WTC11 (cell line): ENCODE measurements at regions of chr6 and their contacts with region 1.

Region 1: GRCh38 chr6:26216356-26216885 is 129.2 kb downstream of the HFE start:
- DNase-seq: no peak
- ATAC-seq: peak; percentile 53
- H3K4me3 Mint-ChIP-seq: no peak overlapping the region
- H3K27ac Mint-ChIP-seq: no peak overlapping the region
- H3K4me1 Mint-ChIP-seq: peaks cover 36% of the 10 kb centered on the region
- H3K27me3 Mint-ChIP-seq: no peaks in the 10 kb centered on the region
- CTCF ChIP-seq: no peak

Region 2: GRCh38 chr6:26054857-26055669 is 161.4 kb before region 1 on chr6:
- CTCF ChIA-PET with region 1: no interaction called
- POLR2A ChIA-PET with region 1: interaction called, 18 read pairs
- DNase-seq: peak; percentile 74
- ATAC-seq: peak; percentile 66
- H3K4me3 Mint-ChIP-seq: peak overlapping the region; percentile 89
- H3K27ac Mint-ChIP-seq: peak overlapping the region; percentile 98
- H3K4me1 Mint-ChIP-seq: peaks cover 29% of the 10 kb centered on the region
- H3K27me3 Mint-ChIP-seq: no peaks in the 10 kb centered on the region
- CTCF ChIP-seq: no peak

Region 3: GRCh38 chr6:26175428-26176181 is 40.8 kb before region 1 on chr6:
- CTCF ChIA-PET with region 1: interaction called, 5 read pairs
- POLR2A ChIA-PET with region 1: interaction called, 15 read pairs
- DNase-seq: peak; percentile 46
- ATAC-seq: peak; percentile 7; the same call in 1 of the 2 replicates
- H3K4me3 Mint-ChIP-seq: peak overlapping the region; percentile 25; the same call in 1 of the 2 replicates
- H3K27ac Mint-ChIP-seq: 0 out of 2 replicates have a peak overlapping the region, but pooled peaks have one; percentile 45
- H3K4me1 Mint-ChIP-seq: peaks cover 28% of the 10 kb centered on the region
- H3K27me3 Mint-ChIP-seq: no peaks in the 10 kb centered on the region; the same call in 1 of the 2 replicates
- CTCF ChIP-seq: peak; percentile 28; the same call in 1 of the 2 replicates

Region 4: GRCh38 chr6:26234421-26235296 is 18.2 kb after region 1 on chr6:
- CTCF ChIA-PET with region 1: no interaction called
- POLR2A ChIA-PET with region 1: interaction called, 216 read pairs
- DNase-seq: no peak
- ATAC-seq: peak; percentile 70
- H3K4me3 Mint-ChIP-seq: peak overlapping the region; percentile 94
- H3K27ac Mint-ChIP-seq: peak overlapping the region; percentile 99
- H3K4me1 Mint-ChIP-seq: peaks cover 33% of the 10 kb centered on the region
- H3K27me3 Mint-ChIP-seq: no peaks in the 10 kb centered on the region
- CTCF ChIP-seq: no peak

Region 5: GRCh38 chr6:26285143-26286134 is 69.0 kb after region 1 on chr6:
- CTCF ChIA-PET with region 1: no interaction called
- POLR2A ChIA-PET with region 1: interaction called, 25 read pairs
- DNase-seq: peak; percentile 96
- ATAC-seq: peak; percentile 73
- H3K4me3 Mint-ChIP-seq: peak overlapping the region; percentile 97
- H3K27ac Mint-ChIP-seq: peak overlapping the region; percentile 100
- H3K4me1 Mint-ChIP-seq: peaks cover 16% of the 10 kb centered on the region
- H3K27me3 Mint-ChIP-seq: peaks cover 4% of the 10 kb centered on the region
- CTCF ChIP-seq: no peak

Region 6: GRCh38 chr6:27809939-27810767 is 1593.7 kb after region 1 on chr6:
- CTCF ChIA-PET with region 1: no interaction called
- POLR2A ChIA-PET with region 1: interaction called, 48 read pairs
- DNase-seq: peak; percentile 58
- ATAC-seq: peak; percentile 7
- H3K4me3 Mint-ChIP-seq: peak overlapping the region; percentile 98
- H3K27ac Mint-ChIP-seq: peak overlapping the region; percentile 98
- H3K4me1 Mint-ChIP-seq: peaks cover 45% of the 10 kb centered on the region
- H3K27me3 Mint-ChIP-seq: peaks cover 3% of the 10 kb centered on the region
- CTCF ChIP-seq: no peak

Region 7: GRCh38 chr6:27893059-27893835 is 1676.8 kb after region 1 on chr6:
- CTCF ChIA-PET with region 1: no interaction called
- POLR2A ChIA-PET with region 1: interaction called, 42 read pairs
- DNase-seq: peak; percentile 91
- ATAC-seq: peak; percentile 46
- H3K4me3 Mint-ChIP-seq: no peak overlapping the region
- H3K27ac Mint-ChIP-seq: peak overlapping the region; percentile 99
- H3K4me1 Mint-ChIP-seq: peaks cover 42% of the 10 kb centered on the region
- H3K27me3 Mint-ChIP-seq: no peaks in the 10 kb centered on the region; the same call in 1 of the 2 replicates
- CTCF ChIP-seq: no peak